Heart right ventricle (tissue), 16 donors: ENCODE measurements at regions of chr3 and their contacts with region 1.

Region 1: GRCh38 chr3:103873897-103874545 is 1439.2 kb downstream of the ZPLD1 start:
- DNase-seq: no peak
- ATAC-seq: no peak
- H3K4me3 ChIP-seq: no peak overlapping the region
- H3K27ac ChIP-seq: no peak overlapping the region
- H3K4me1 ChIP-seq: no peaks in the 10 kb centered on the region
- H3K27me3 ChIP-seq: no peaks in the 10 kb centered on the region
- CTCF ChIP-seq: no peak

Region 2: DNA sequence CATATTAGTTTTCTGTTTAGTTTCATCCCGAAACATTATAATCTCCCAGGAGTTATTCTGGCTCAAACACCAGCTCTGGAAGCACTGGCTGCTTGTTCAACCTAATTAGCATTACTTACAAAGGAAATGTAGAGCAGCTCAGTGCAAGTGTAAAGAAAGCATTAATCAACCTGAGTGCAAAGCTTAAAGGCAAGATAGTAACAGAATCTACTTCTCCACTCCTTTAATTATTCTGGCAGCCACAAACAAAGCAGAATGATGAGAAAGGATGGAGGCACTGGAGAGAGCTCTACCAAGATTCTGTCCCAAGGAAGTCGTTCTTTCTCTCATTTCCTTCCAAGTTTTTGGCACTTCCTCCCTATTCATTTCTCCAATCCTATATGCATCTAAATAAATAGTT is 55.2 kb before region 1 on chr3:
- intact Hi-C with region 1: loop called in 1 of 10 experiments (anchors 1 kb)
- DNase-seq: no peak
- ATAC-seq: no peak
- H3K4me3 ChIP-seq: no peak overlapping the region
- H3K27ac ChIP-seq: no peak overlapping the region
- H3K4me1 ChIP-seq: no peaks in the 10 kb centered on the region
- H3K27me3 ChIP-seq: no peaks in the 10 kb centered on the region
- CTCF ChIP-seq: no peak